ENCODE measurements at regions of chr4 and their contacts with region 1.

Region 1: DNA sequence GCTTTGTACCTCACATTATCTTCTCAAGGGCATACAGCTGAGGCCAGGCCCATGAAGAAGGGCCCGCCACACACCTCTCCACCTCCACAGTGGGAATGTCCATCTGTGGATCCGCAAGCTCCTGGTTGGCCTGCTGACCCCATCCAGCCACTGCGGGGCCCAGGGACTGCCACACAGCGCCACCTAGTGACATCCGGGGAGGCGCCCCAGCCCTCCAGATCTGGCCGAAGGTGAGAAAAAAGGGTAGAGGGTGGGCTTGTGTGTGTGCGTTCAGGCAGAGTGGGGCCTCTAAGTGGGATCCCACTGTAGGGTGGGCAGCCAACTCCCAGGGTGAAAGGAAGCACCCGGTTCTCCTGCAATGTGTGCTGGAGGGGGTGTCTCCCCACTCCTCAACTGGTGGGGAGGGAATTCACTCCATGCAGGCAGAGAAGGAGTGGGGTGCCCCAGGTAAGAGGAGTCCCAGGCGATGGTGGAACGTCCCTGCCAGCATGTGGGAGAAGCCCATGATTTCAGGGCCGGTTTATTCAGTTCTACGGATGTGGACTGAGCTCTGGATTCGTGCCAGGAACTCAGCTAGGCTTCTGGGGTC is 117.3 kb downstream of the ENPP6 start:
- DNase-seq: peak in 4 of 9 donors; percentile 6 to 47 (median 32)
- ATAC-seq: peak; percentile 68
- H3K4me3 ChIP-seq: no peak overlapping the region
- H3K4me3 Mint-ChIP-seq: no peak overlapping the region
- H3K27ac ChIP-seq: no peak overlapping the region
- H3K27ac Mint-ChIP-seq: no peak overlapping the region
- H3K4me1 ChIP-seq: no peaks in the 10 kb centered on the region
- H3K4me1 Mint-ChIP-seq: peaks cover 0 to 11% (median 6%) of the 10 kb centered on the region in 7 donors
- H3K27me3 ChIP-seq: no peaks in the 10 kb centered on the region
- H3K27me3 Mint-ChIP-seq: peaks cover 7 to 23% (median 14%) of the 10 kb centered on the region in 5 donors

Region 2: GRCh38 chr4:183840311-183840710 is 260.1 kb before region 1 on chr4:
- CTCF ChIA-PET with region 1: interaction called, 4 read pairs
- POLR2A ChIA-PET with region 1: no interaction called
- intact Hi-C with region 1: loop called in 1 of 2 experiments (anchors 1 kb)
- DNase-seq: peak; percentile 27 to 62 (median 57)
- ATAC-seq: peak; percentile 70
- H3K4me3 ChIP-seq: no peak overlapping the region
- H3K4me3 Mint-ChIP-seq: no peak overlapping the region
- H3K27ac ChIP-seq: no peak overlapping the region
- H3K27ac Mint-ChIP-seq: no peak overlapping the region
- H3K4me1 ChIP-seq: no peaks in the 10 kb centered on the region
- H3K4me1 Mint-ChIP-seq: no peaks in the 10 kb centered on the region
- H3K27me3 ChIP-seq: no peaks in the 10 kb centered on the region
- H3K27me3 Mint-ChIP-seq: peaks cover 6 to 26% (median 20%) of the 10 kb centered on the region in 5 donors

Region 3: GRCh38 chr4:184583738-184584502 is 483.5 kb after region 1 on chr4:
- CTCF ChIA-PET with region 1: no interaction called
- POLR2A ChIA-PET with region 1: no interaction called
- intact Hi-C with region 1: no loop called
- DNase-seq: no peak
- ATAC-seq: peak; percentile 54
- H3K4me3 ChIP-seq: no peak overlapping the region
- H3K4me3 Mint-ChIP-seq: peak overlapping the region in 2 of 10 donors; percentile 9 to 26
- H3K27ac ChIP-seq: no peak overlapping the region
- H3K27ac Mint-ChIP-seq: peak overlapping the region in 5 of 9 donors; percentile 4 to 53 (median 48)
- H3K4me1 ChIP-seq: no peaks in the 10 kb centered on the region
- H3K4me1 Mint-ChIP-seq: peaks cover 2 to 22% (median 12%) of the 10 kb centered on the region in 7 donors
- H3K27me3 ChIP-seq: no peaks in the 10 kb centered on the region
- H3K27me3 Mint-ChIP-seq: peaks cover 0 to 3% (median 0%) of the 10 kb centered on the region in 5 donors